ENCODE measurements at regions of chr12 and their contacts with region 1.

Region 1: DNA sequence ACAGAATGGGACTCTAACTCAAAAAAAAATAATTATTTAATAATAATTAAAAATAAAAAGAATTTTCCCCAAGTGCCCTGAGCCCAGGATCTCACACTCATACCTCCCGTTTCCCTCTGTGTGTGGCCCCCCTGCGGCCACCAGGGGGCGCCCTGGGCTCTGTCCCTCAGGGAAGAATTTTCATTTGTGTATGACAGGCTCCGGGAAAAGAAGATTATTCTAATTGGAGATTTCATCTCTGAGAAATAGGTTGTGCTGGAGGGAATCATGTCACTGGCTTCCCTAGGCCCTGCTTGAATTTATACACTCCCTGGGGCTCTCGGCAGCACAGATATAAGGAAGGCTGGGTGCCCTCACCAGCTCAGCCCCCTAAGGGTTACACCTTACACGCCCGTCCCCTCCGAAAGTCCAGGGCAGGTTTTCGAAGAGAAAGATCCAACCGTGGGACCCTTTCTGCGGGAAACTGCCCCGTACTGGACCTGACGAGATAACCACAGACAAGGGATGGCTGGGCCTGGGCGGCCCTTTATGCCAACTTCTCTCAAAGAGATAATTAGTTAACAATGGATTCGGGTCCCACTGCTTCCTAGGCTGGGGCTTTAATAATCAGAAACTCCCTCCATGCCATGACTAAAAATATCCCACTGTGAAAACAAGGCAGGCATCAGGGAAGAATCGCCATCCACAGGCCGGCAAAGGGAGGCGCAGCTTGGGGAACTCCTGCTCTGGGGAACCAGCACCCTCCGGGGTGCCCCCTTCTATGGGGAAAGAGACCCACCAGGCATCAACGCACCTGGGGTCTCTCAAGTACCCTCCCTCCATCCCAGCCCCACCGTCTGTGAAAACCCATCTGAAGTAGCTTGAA is 80.7 kb downstream of the KDM2B start:
- DNase-seq: peak; percentile 65 to 92
- ATAC-seq: peak; percentile 89 to 95
- H3K4me3 ChIP-seq: no peak overlapping the region
- H3K27ac ChIP-seq: peak overlapping the region in 1 of 2 experiments; percentile 6; a peak in 1 of 6 replicates
- H3K4me1 ChIP-seq: 0 out of 3 replicates have a peak, but pooled peaks cover 3% of the 10 kb centered on the region
- CTCF ChIP-seq: peak; percentile 98
- EP300 ChIP-seq: no peak
- POLR2A ChIP-seq: no peak
- RAD21 ChIP-seq: peak; percentile 73 to 78

Region 2: DNA sequence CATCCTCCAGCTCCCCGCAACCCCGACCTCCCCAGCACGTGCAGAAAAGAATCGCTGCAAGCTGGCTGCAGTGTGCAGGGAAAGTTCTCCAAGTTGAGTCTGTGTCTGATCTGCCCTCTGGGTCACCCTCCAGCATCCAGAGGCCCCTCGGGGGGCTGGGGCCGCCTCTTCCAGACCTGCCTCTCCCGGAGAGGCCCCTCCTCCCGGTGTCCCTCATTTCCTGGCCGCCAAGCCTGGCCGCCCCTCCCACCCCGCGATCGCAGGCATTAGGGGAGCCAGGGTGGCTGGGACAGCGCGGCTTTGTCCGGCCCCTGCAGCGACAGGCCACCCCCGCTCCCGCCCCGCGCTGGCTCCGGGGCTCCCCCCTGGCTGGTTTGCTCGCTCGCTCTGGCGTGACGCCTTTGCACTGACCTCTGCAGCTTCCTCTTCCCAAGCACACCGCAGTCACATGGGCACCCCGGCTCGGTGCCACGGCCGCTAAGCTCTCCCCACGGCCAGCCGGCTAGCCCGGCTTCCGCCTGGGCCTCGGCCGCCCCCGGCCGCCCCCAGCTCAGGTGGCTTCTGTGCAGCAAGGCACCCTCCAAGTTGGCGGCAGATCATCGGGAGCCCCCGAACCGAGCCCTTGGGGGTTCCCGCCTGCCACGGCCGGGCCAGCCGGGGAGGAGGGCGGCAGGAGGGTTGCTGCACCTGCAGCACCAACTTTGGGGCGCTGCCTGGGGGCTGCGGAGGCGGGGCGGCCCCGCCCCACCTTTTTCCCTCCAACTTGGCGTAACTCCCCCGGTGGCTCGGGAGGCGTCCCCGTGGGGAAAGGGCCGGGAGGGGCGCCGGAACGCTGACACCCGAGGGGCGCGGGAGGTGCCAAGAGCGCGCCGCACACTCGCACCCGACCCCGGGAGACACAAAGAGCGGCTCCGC is 37.0 kb after region 1 on chr12:
- CTCF ChIA-PET with region 1: interaction called, 19 read pairs
- POLR2A ChIA-PET with region 1: interaction called, 3 read pairs
- DNase-seq: peak; percentile 76 to 79
- ATAC-seq: peak; percentile 79 to 80
- H3K4me3 ChIP-seq: peak overlapping the region; percentile 66
- H3K27ac ChIP-seq: peak overlapping the region; percentile 82 to 89
- H3K4me1 ChIP-seq: peaks cover 28% of the 10 kb centered on the region
- CTCF ChIP-seq: no peak
- EP300 ChIP-seq: no peak
- POLR2A ChIP-seq: peak; percentile 64; the same call in 1 of the 2 replicates
- RAD21 ChIP-seq: no peak

Region 3: GRCh38 chr12:121579981-121580868 is 80.1 kb after region 1 on chr12:
- CTCF ChIA-PET with region 1: interaction called, 12 read pairs
- POLR2A ChIA-PET with region 1: no interaction called
- DNase-seq: peak; percentile 58 to 67
- ATAC-seq: peak; percentile 78 to 80
- H3K4me3 ChIP-seq: peak overlapping the region; percentile 54
- H3K27ac ChIP-seq: peak overlapping the region; percentile 77 to 94
- H3K4me1 ChIP-seq: peaks cover 49% of the 10 kb centered on the region
- CTCF ChIP-seq: no peak
- EP300 ChIP-seq: no peak
- POLR2A ChIP-seq: peak; percentile 47
- RAD21 ChIP-seq: no peak

Region 4: DNA sequence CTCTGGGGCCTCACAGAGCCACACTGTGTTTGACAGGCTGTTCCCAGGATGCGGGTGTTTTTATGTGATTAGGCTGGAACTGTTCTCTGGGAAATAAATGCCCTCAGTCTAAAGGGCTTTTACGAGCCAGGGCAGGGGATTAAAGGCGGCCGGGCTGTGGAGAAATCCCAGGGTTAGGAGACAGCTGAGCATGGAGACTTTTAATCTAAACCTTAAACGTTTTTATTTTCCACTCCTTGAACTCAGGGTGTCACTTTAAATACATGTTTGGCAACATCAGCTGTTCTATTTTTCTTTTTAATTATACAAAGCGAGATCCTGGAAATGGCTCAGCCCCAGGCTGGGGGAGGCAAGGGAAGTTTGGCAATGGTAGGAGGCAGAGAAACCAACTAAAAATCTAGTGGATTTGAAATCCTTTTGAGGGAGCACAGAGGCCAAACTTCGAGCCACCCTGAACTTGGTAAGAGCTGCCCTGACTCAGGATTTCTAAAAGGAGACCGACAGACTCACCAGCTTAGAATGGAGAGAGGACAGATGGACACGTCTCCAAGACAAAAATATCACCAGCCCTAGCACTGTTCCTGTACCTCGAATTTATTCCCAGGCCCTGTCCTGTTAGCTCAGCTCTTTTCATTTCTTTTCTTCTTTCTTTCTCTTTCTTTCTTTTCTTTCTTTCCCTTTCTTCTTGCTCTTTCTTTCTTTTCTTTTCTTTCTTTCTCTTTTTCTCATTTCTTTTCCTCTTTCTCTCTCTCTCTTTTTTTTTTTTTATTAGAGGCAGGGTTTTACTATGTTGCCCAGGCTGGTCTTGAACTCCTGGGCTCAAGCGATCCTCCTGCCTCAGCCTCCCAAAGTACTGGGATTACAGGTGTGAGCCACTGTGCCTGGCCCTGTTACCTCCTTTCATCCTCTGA is 110.3 kb after region 1 on chr12:
- CTCF ChIA-PET with region 1: no interaction called
- POLR2A ChIA-PET with region 1: no interaction called
- DNase-seq: no peak
- ATAC-seq: peak; percentile 13 to 55; a peak in 2 of 6 replicates
- H3K4me3 ChIP-seq: no peak overlapping the region
- H3K27ac ChIP-seq: 0 out of 6 replicates have a peak overlapping the region, but pooled peaks of 1 of the 2 experiments have one; percentile 23
- H3K4me1 ChIP-seq: no peaks in the 10 kb centered on the region
- CTCF ChIP-seq: no peak
- EP300 ChIP-seq: no peak
- POLR2A ChIP-seq: no peak
- RAD21 ChIP-seq: no peak

Region 5: GRCh38 chr12:121668750-121669520 is 168.8 kb after region 1 on chr12:
- CTCF ChIA-PET with region 1: interaction called, 30 read pairs
- POLR2A ChIA-PET with region 1: no interaction called
- DNase-seq: peak; percentile 51 to 57
- ATAC-seq: peak; percentile 41 to 57; a peak in 3 of 6 replicates
- H3K4me3 ChIP-seq: no peak overlapping the region
- H3K27ac ChIP-seq: no peak overlapping the region
- H3K4me1 ChIP-seq: peaks cover 12% of the 10 kb centered on the region
- CTCF ChIP-seq: peak; percentile 57
- EP300 ChIP-seq: no peak
- POLR2A ChIP-seq: no peak
- RAD21 ChIP-seq: peak; percentile 61 to 70